CD4-positive, alpha-beta memory T cell (primary cell): ENCODE measurements at regions of chr7 and their contacts with region 1.

Region 1: DNA sequence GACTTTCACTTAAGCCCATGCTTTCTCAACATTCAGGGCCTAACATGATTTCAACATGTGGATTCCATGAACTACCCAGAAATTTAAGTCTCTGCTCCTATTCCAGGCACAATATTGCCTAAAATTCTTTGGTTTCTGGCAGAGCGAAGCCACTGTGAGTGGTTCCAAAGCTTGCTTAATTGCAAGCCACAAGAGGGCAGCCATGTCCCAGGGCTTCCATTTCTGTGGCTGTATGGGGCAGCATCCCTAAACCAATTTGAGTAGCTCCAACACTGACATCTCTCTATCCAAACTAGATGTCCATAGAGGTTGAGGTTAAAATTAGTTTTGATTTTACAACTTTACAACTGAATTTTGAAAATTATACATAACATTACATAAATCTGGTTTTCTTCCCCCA is 56.3 kb upstream of the MDFIC start:
- DNase-seq: peak; percentile 44 to 61 (median 55)
- H3K4me3 ChIP-seq: no peak overlapping the region
- H3K4me3 Mint-ChIP-seq: no peak overlapping the region
- H3K27ac ChIP-seq: no peak overlapping the region
- H3K27ac Mint-ChIP-seq: no peak overlapping the region
- H3K4me1 ChIP-seq: no peaks in the 10 kb centered on the region
- H3K4me1 Mint-ChIP-seq: peaks cover 2 to 14% (median 8%) of the 10 kb centered on the region in 4 donors
- H3K27me3 ChIP-seq: no peaks in the 10 kb centered on the region
- H3K27me3 Mint-ChIP-seq: no peaks in the 10 kb centered on the region

Region 2: GRCh38 chr7:114715907-114716306 is 149.7 kb before region 1 on chr7:
- CTCF ChIA-PET with region 1: no interaction called
- POLR2A ChIA-PET with region 1: no interaction called
- intact Hi-C with region 1: no loop called
- DNase-seq: no peak
- H3K4me3 ChIP-seq: no peak overlapping the region
- H3K4me3 Mint-ChIP-seq: no peak overlapping the region
- H3K27ac ChIP-seq: no peak overlapping the region
- H3K27ac Mint-ChIP-seq: no peak overlapping the region
- H3K4me1 ChIP-seq: no peaks in the 10 kb centered on the region
- H3K4me1 Mint-ChIP-seq: no peaks in the 10 kb centered on the region
- H3K27me3 ChIP-seq: no peaks in the 10 kb centered on the region
- H3K27me3 Mint-ChIP-seq: peaks cover 0 to 3% of the 10 kb centered on the region in 2 donors

Region 3: DNA sequence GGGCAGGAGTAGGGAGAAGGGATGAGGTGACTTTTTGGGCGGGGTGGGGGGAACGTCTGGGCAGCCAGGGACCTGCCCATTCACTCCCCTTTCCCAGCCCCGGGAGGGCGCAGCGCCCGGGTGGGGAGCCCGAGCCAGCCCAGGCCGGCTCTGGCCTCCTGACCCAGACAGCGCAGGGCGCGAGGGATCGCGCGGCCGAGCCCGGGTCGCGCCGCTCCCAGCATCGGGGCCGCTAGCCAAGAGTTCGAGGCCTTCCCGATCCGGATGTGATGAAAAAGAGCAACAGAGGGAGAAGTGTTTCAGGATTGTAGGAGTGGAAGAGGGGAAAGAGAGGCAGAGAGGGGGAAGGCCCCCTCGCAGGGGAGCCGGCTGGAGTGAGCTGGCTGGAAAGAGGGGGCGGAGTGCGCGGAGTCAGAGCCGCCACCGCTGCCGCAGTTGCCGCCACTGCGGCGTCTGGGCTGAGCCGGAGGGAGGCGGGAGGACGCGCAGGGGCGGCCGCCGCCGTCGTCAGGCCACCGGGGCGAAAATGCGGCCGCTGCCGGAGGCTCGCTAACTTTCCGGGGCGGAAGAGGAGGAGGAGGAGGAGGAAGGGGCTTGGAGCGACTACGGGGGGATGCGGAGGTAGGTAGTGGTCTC is 56.6 kb after region 1 on chr7 and contains the start of gene MDFIC:
- CTCF ChIA-PET with region 1: interaction called, 52 read pairs
- POLR2A ChIA-PET with region 1: interaction called, 5 read pairs
- intact Hi-C with region 1: loop called (anchors 5 kb)
- DNase-seq: peak; percentile 59 to 75 (median 63)
- H3K4me3 ChIP-seq: peak within 1 kb of the TSS; percentile 59 to 93
- H3K4me3 Mint-ChIP-seq: peak within 1 kb of the TSS; percentile 95 to 99 (median 98)
- H3K27ac ChIP-seq: peak within 1 kb of the TSS; percentile 90
- H3K27ac Mint-ChIP-seq: peak within 1 kb of the TSS; percentile 91 to 99 (median 96)
- H3K4me1 ChIP-seq: peaks cover 53% of the 10 kb centered on the region
- H3K4me1 Mint-ChIP-seq: peaks cover 43 to 75% (median 52%) of the 10 kb centered on the region in 4 donors
- H3K27me3 ChIP-seq: no peaks in the 10 kb centered on the region
- H3K27me3 Mint-ChIP-seq: peaks cover 0 to 1% of the 10 kb centered on the region in 2 donors
- total RNA-seq, gene MDFIC: 68.1 to 78.0 TPM

Region 4: DNA sequence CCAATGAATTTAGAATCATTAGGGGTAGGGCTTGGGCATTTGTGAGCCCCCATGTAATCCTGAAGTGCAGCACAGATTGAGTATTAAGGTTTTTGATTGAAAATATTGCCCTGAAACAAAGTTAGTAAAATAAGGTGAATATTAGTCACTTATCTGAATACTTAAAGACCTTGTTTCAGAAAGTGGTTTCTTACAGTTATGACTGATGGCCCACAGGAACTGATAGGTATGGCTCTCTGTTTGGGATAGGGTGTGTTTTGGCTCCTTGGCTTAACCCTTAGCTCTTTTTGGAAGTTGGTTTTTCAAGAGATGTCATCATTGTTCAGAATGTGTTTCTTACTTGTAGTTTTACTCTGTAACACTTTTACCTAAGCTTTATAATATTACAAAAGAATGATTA is 91.1 kb after region 1 on chr7:
- CTCF ChIA-PET with region 1: interaction called, 13 read pairs
- POLR2A ChIA-PET with region 1: no interaction called
- intact Hi-C with region 1: no loop called
- DNase-seq: no peak
- H3K4me3 ChIP-seq: no peak overlapping the region
- H3K4me3 Mint-ChIP-seq: peak overlapping the region in 3 of 8 donors; percentile 8 to 59 (median 19)
- H3K27ac ChIP-seq: no peak overlapping the region
- H3K27ac Mint-ChIP-seq: peak overlapping the region in 1 of 7 donors; percentile 24
- H3K4me1 ChIP-seq: peaks cover 87% of the 10 kb centered on the region
- H3K4me1 Mint-ChIP-seq: peaks cover 59 to 83% (median 73%) of the 10 kb centered on the region in 4 donors
- H3K27me3 ChIP-seq: no peaks in the 10 kb centered on the region
- H3K27me3 Mint-ChIP-seq: no peaks in the 10 kb centered on the region

Region 5: DNA sequence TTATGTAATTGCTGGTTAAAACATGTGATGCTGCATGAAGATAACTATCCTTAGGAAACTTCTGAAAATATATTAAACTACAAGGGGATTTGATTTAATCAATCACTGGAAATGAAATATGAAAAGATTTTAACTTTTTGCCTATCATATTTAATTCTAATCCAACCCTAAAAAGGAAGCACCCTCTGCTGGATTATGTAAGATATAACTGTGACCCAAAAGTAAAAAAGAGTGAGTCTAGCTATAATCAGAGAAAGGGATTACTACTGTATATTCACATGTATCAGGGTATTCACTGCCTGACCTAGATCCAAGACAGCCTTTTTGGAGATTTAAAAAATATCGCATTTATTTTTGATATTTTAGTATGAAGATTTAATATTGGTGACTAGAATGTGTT is 351.8 kb after region 1 on chr7:
- CTCF ChIA-PET with region 1: interaction called, 167 read pairs
- POLR2A ChIA-PET with region 1: interaction called, 3 read pairs
- intact Hi-C with region 1: loop called (anchors 1 kb)
- DNase-seq: peak in 4 of 5 donors; percentile 22 to 29 (median 26)
- H3K4me3 ChIP-seq: no peak overlapping the region
- H3K4me3 Mint-ChIP-seq: no peak overlapping the region
- H3K27ac ChIP-seq: no peak overlapping the region
- H3K27ac Mint-ChIP-seq: peak overlapping the region in 1 of 7 donors; percentile 10
- H3K4me1 ChIP-seq: peaks cover 15% of the 10 kb centered on the region
- H3K4me1 Mint-ChIP-seq: peaks cover 12 to 18% (median 14%) of the 10 kb centered on the region in 4 donors
- H3K27me3 ChIP-seq: no peaks in the 10 kb centered on the region
- H3K27me3 Mint-ChIP-seq: peaks cover 0 to 2% of the 10 kb centered on the region in 2 donors

Region 6: GRCh38 chr7:115679976-115680375 is 814.4 kb after region 1 on chr7:
- CTCF ChIA-PET with region 1: interaction called, 8 read pairs
- POLR2A ChIA-PET with region 1: no interaction called
- intact Hi-C with region 1: loop called (anchors 1 kb)
- DNase-seq: peak in 4 of 5 donors; percentile 5 to 10 (median 8)
- H3K4me3 ChIP-seq: no peak overlapping the region
- H3K4me3 Mint-ChIP-seq: no peak overlapping the region
- H3K27ac ChIP-seq: no peak overlapping the region
- H3K27ac Mint-ChIP-seq: no peak overlapping the region
- H3K4me1 ChIP-seq: no peaks in the 10 kb centered on the region
- H3K4me1 Mint-ChIP-seq: no peaks in the 10 kb centered on the region
- H3K27me3 ChIP-seq: no peaks in the 10 kb centered on the region
- H3K27me3 Mint-ChIP-seq: peaks cover 0 to 1% of the 10 kb centered on the region in 2 donors